ENCODE measurements at regions of chr11 and their contacts with region 1.

Region 1: GRCh38 chr11:47950396-47950795 is 30.0 kb upstream of the PTPRJ start:
- DNase-seq: peak; percentile 97
- H3K4me3 ChIP-seq: no peak overlapping the region
- H3K27ac ChIP-seq: peak overlapping the region; percentile 5
- H3K4me1 ChIP-seq: peaks cover 7% of the 10 kb centered on the region
- H3K27me3 ChIP-seq: no peaks in the 10 kb centered on the region
- CTCF ChIP-seq: no peak

Region 2: GRCh38 chr11:47992959-47993820 is 42.8 kb after region 1 on chr11:
- CTCF ChIA-PET with region 1: no interaction called
- POLR2A ChIA-PET with region 1: interaction called, 10 read pairs
- intact Hi-C with region 1: no loop called
- DNase-seq: no peak
- H3K4me3 ChIP-seq: no peak overlapping the region
- H3K27ac ChIP-seq: no peak overlapping the region
- H3K4me1 ChIP-seq: no peaks in the 10 kb centered on the region
- H3K27me3 ChIP-seq: no peaks in the 10 kb centered on the region
- CTCF ChIP-seq: no peak